Caco-2 (cell line): ENCODE measurements at regions of chr2 and their contacts with region 1.

Region 1: DNA sequence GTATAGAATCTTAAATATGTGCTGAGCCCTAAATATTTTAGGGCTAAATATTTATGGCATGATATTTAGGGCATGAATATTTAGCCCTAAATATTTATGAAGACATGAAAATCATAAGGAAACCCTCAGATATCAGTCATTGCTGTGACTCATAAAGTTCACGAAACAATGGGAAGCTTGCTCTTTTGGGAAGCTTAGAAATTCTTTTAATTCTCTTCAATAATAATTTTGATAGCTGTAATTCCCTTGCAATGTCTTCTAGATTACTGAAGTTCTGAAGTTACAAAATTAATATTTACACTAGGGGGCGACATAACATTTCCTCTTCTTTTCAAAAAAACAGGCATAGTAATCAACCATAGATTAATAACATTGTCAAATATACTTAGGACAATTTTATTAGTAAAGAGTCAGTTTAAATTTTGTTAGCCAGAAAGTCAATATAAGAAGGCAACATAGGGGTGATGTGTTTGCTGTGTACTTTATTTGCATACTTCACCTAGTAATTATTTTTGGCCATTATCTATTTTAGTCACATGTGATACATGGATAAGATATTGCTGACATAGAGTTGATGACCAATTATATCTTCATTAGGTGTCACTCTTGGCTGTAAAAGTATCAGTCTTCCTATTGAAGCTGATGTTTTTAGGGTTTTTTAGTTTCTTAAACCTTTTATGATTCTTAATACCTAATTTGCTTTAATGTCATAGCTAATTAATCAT is 13.2 kb downstream of the ZNF804A start:
- DNase-seq: no peak
- H3K4me3 ChIP-seq: no peak overlapping the region
- H3K4me3 Mint-ChIP-seq: no peak overlapping the region
- H3K27ac Mint-ChIP-seq: no peak overlapping the region
- H3K4me1 ChIP-seq: peaks cover 8% of the 10 kb centered on the region; the same call in 1 of the 2 replicates
- H3K4me1 Mint-ChIP-seq: no peaks in the 10 kb centered on the region
- H3K27me3 ChIP-seq: no peaks in the 10 kb centered on the region
- H3K27me3 Mint-ChIP-seq: no peaks in the 10 kb centered on the region
- CTCF ChIP-seq: peak; percentile 34 to 41

Region 2: GRCh38 chr2:185279999-185280398 is 668.5 kb after region 1 on chr2:
- CTCF ChIA-PET with region 1: no interaction called
- POLR2A ChIA-PET with region 1: no interaction called
- intact Hi-C with region 1: loop called (anchors 1 kb)
- DNase-seq: no peak
- H3K4me3 ChIP-seq: no peak overlapping the region
- H3K4me3 Mint-ChIP-seq: no peak overlapping the region
- H3K27ac Mint-ChIP-seq: no peak overlapping the region
- H3K4me1 ChIP-seq: peaks cover 12% of the 10 kb centered on the region
- H3K4me1 Mint-ChIP-seq: peaks cover 4% of the 10 kb centered on the region
- H3K27me3 ChIP-seq: no peaks in the 10 kb centered on the region
- H3K27me3 Mint-ChIP-seq: no peaks in the 10 kb centered on the region
- CTCF ChIP-seq: peak; percentile 45 to 51